Activated CD4-positive, alpha-beta T cell treated with anti-CD3 and anti-CD28 coated beads, Interleukin-2, amount 10 ng/mL, durations not matched to agents 24 days and 14 days (primary cell): ENCODE measurements at regions of chr1 and their contacts with region 1.

Region 1: GRCh38 chr1:100866041-100866900 is 28.4 kb downstream of the EXTL2 start:
- DNase-seq: no peak
- H3K4me3 Mint-ChIP-seq: no peak overlapping the region
- H3K27ac Mint-ChIP-seq: no peak overlapping the region
- H3K4me1 Mint-ChIP-seq: no peaks in the 10 kb centered on the region
- H3K27me3 Mint-ChIP-seq: peaks cover 2% of the 10 kb centered on the region

Region 2: GRCh38 chr1:100530880-100531487 is 335.3 kb before region 1 on chr1:
- intact Hi-C with region 1: loop called (anchors 5 kb)
- DNase-seq: peak; percentile 77
- H3K4me3 Mint-ChIP-seq: no peak overlapping the region
- H3K27ac Mint-ChIP-seq: peak overlapping the region; percentile 10
- H3K4me1 Mint-ChIP-seq: peaks cover 23% of the 10 kb centered on the region
- H3K27me3 Mint-ChIP-seq: peaks cover 21% of the 10 kb centered on the region

Region 3: DNA sequence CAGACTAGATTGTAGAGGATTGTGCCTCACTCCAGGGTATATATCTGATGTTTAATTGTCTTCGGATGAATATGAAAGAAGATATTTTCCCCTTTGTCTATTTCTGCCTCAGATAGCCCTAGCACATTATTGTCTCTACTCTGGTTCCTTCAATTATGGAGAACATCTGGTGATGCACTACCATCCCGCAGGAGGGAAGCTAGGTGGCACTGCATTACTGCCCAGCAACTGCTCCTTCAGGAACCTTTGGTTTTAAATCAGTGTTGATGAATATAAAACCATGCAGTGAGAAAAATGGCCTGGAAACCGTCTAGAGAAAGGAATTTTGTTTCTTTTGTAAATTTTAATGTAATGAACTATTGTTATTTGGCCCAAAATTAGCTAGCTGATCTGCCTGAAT is 259.8 kb before region 1 on chr1:
- intact Hi-C with region 1: loop called (anchors 2 kb)
- DNase-seq: no peak
- H3K4me3 Mint-ChIP-seq: no peak overlapping the region
- H3K27ac Mint-ChIP-seq: no peak overlapping the region
- H3K4me1 Mint-ChIP-seq: no peaks in the 10 kb centered on the region
- H3K27me3 Mint-ChIP-seq: peaks cover 26% of the 10 kb centered on the region

Region 4: GRCh38 chr1:100816049-100816448 is 50.2 kb before region 1 on chr1:
- intact Hi-C with region 1: no loop called
- DNase-seq: no peak
- H3K4me3 Mint-ChIP-seq: no peak overlapping the region
- H3K27ac Mint-ChIP-seq: no peak overlapping the region
- H3K4me1 Mint-ChIP-seq: peaks cover 11% of the 10 kb centered on the region
- H3K27me3 Mint-ChIP-seq: peaks cover 35% of the 10 kb centered on the region